ENCODE measurements at regions of chr7 and their contacts with region 1.

Region 1: DNA sequence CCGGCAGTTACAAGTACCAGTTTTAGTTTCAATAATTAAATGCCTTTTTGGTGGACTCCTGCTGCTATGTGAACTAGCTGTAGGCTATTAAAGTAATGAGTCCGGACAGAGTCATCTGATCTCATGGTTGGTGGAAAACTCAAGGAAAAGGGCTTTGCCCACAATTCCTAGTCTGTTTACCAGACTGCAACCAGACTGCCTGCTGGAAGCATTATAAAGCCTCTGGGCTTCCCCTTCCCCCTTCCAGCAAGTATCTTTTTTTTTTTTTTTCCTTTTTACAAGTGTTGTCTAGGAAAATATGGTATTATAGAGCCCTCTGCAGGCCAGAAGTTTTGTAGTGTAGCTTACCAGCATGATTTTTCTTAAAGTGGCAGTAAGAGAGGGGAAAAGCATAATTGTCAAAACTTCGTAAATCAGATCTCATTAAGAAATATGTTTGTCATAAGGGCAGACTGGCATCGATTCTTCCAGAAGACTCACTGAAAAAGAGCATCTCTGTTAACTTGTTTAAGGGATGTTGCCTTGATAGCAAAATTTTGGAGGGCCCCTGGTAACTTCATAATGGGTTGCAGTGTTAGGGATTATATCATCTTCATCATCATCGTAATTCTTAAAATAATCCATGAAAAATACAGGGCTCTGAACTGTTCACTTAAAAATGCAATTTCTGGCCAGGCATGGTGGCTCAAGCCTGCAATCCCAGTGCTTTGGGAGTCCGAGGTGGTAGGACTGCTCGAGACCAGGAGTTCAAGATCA is 181.3 kb downstream of the TAX1BP1 start:
- DNase-seq: peak; percentile 49 to 82
- ATAC-seq: peak; percentile 79 to 90
- H3K4me3 ChIP-seq: 0 out of 3 replicates have a peak overlapping the region, but pooled peaks have one; percentile 1
- H3K27ac ChIP-seq: peak overlapping the region; percentile 43 to 71; a peak in 5 of 6 replicates
- H3K4me1 ChIP-seq: peaks cover 37% of the 10 kb centered on the region
- CTCF ChIP-seq: peak; percentile 84
- EP300 ChIP-seq: no peak
- POLR2A ChIP-seq: no peak
- RAD21 ChIP-seq: peak; percentile 88 to 94

Region 2: DNA sequence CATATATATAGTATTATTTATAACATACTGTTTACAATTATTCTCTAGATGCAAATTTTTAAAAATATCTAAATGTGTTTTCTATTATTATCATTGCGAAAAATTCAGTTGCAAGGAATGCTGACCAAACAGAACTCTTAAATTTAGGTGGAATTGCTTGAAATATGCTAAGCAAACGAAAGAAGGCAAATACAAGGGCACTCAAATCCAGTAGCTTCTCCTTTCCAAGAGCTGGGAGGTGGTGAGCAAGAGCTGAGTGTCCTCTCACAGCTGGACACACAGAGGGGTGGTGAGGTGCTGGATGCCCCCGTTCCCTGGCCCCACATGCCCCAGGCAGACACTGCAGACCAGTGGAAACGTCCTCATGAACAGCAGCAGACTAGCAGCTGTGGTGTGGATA is 15.3 kb before region 1 on chr7:
- CTCF ChIA-PET with region 1: interaction called, 14 read pairs
- POLR2A ChIA-PET with region 1: no interaction called
- DNase-seq: no peak
- ATAC-seq: no peak
- H3K4me3 ChIP-seq: no peak overlapping the region
- H3K27ac ChIP-seq: no peak overlapping the region
- H3K4me1 ChIP-seq: no peaks in the 10 kb centered on the region
- CTCF ChIP-seq: no peak
- EP300 ChIP-seq: no peak
- POLR2A ChIP-seq: no peak
- RAD21 ChIP-seq: no peak

Region 3: DNA sequence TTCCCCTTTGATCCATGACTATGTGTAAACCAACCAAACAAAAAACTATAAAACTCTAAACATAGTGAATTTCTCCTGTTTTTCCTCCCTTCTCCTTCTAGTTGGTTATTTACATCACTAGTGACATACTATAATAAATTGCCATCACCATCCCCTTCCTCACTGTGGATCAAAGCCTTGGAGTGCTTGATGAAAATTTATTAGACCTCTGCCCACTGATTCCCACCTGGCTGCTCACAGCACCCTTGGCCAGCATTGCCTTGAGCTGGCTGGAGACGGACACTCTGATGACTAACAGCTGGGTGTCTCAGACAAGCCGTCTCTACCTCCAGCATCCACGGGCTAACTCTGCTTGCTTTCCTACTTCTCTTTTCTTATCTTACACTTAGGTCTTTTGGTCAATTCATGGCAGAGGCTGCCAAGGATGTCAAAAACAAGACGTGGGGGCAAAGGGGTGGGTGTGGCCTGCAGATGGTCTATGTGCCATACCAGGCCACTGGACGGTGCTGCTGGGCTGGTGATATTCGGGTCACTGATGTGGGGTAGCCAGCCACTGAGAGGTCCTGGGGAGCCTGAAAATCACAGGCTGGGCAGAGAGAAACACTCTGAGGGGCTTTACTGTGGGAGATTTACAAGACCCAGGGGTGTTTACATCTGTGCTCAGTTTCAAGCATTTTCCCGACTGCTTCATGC is 26.5 kb after region 1 on chr7:
- CTCF ChIA-PET with region 1: no interaction called
- POLR2A ChIA-PET with region 1: no interaction called
- DNase-seq: no peak
- ATAC-seq: peak in 1 of 2 experiments; percentile 29; a peak in 1 of 6 replicates
- H3K4me3 ChIP-seq: no peak overlapping the region
- H3K27ac ChIP-seq: no peak overlapping the region
- H3K4me1 ChIP-seq: no peaks in the 10 kb centered on the region
- CTCF ChIP-seq: no peak
- EP300 ChIP-seq: no peak
- POLR2A ChIP-seq: no peak
- RAD21 ChIP-seq: no peak; a peak in 1 of 5 replicates

Region 4: DNA sequence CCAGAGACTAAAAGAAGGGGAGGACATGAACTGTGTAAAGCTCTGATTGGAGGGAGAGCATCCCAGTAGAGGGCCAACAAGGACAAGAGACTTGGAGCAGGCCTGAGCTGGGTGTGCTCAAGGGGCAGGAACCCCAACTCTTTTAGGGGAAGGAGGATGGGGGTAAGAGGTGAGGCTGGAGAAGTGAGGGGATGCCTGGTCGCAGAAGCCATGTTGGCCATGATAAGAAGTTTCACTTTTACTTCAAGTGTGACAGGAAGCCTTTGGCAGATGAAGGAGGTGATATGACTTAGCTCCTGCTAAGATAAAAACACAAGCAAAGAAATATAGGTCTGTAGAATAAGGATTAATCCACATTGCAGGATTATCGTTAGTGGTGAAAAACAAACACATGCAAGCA is 51.0 kb after region 1 on chr7:
- CTCF ChIA-PET with region 1: no interaction called
- POLR2A ChIA-PET with region 1: no interaction called
- DNase-seq: no peak
- ATAC-seq: no peak
- H3K4me3 ChIP-seq: no peak overlapping the region
- H3K27ac ChIP-seq: no peak overlapping the region
- H3K4me1 ChIP-seq: 0 out of 3 replicates have a peak, but pooled peaks cover 3% of the 10 kb centered on the region
- CTCF ChIP-seq: no peak
- EP300 ChIP-seq: no peak
- POLR2A ChIP-seq: no peak
- RAD21 ChIP-seq: no peak

Region 5: GRCh38 chr7:28041491-28042314 is 120.4 kb after region 1 on chr7:
- CTCF ChIA-PET with region 1: no interaction called
- POLR2A ChIA-PET with region 1: no interaction called
- DNase-seq: peak in 1 of 2 experiments; percentile 87
- ATAC-seq: peak; percentile 60 to 79
- H3K4me3 ChIP-seq: no peak overlapping the region
- H3K27ac ChIP-seq: peak overlapping the region; percentile 90 to 92
- H3K4me1 ChIP-seq: peaks cover 73% of the 10 kb centered on the region
- CTCF ChIP-seq: no peak
- EP300 ChIP-seq: peak in 1 of 2 experiments; percentile 75; a peak in 1 of 5 replicates
- POLR2A ChIP-seq: no peak
- RAD21 ChIP-seq: peak in 1 of 2 experiments; percentile 25; a peak in 1 of 5 replicates